RWPE1 (cell line): ENCODE measurements at regions of chr2 and their contacts with region 1.

Region 1: DNA sequence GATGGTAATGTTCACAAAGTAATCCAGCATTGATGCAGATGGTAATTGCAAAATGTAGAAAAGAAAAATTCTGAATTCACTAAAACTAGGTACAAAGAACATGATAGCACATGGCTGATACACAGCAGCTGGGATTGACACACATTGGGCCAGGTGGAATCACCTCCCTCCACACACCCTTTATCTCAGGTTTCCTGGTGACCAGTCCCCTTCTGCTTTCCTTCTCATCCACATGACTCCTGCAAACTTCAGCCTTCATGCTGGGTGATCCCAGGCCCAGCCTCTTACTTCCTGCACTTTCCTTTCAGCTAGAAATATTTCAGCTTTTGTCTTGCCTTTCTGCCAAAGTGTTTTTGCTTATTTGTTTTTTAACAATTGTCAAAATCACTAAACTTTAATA is 246.9 kb downstream of the LNPK start:
- DNase-seq: no peak
- H3K27ac ChIP-seq: no peak overlapping the region
- CTCF ChIP-seq: no peak

Region 2: DNA sequence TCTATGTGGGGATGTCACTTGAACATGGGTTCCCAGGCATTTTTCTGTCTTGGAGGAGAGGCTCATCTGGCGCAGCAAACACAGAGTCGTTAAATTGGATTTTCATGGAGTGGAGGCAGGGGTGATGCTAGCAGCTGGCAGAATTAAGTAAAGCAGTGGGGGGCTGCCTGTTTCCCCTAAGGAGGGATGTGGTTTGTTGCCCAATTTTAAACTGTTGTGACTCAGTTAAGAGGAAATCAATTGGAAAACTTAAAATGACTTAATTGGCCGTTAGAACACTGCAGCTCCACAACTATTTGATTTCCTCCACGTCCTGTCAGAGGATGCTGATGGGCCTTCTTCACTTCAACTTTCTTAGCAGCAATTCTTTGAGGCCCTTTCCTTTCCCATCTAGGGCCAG is 219.5 kb before region 1 on chr2:
- CTCF ChIA-PET with region 1: no interaction called
- POLR2A ChIA-PET with region 1: no interaction called
- DNase-seq: no peak
- H3K27ac ChIP-seq: no peak overlapping the region
- CTCF ChIP-seq: no peak

Region 3: DNA sequence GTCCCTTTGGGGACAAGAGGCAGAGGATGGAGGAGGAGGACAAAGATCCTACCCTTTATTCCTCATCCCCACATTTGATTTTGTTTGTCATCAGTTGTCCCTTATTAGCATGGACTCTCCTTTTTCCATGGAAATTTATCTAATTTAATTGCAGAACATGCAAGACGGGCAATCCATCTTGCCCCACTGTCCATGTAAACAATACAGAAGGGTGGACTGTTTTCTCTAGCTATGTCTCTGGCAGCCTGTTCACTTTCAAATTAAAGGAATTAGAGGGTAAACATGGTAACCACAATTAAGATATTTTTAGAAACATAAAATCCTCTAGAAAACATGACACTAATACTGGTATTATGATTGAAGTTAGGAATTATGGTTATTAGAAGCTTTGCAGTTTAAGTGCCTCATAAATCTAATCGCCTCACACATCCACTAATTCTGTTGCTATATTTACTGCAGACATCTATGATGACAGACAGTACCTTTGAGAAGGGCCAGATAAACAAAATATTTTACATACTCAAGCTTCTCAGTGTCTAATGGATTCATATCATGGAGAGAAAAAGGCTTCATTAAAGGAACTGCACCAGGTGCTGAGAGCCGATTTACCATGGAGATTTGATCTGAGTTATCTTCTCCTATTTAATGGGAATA is 31.4 kb after region 1 on chr2:
- CTCF ChIA-PET with region 1: interaction called, 4 read pairs
- POLR2A ChIA-PET with region 1: interaction called, 10 read pairs
- DNase-seq: no peak
- H3K27ac ChIP-seq: no peak overlapping the region
- CTCF ChIP-seq: no peak